ENCODE measurements at regions of chr3 and their contacts with region 1.

Region 1: GRCh38 chr3:154745960-154746359 is 316.0 kb upstream of the GPR149 start:
- DNase-seq: peak in 1 of 2 experiments; percentile 32
- H3K4me3 ChIP-seq: no peak overlapping the region
- H3K4me3 Mint-ChIP-seq: no peak overlapping the region
- H3K27ac Mint-ChIP-seq: no peak overlapping the region
- H3K4me1 ChIP-seq: no peaks in the 10 kb centered on the region
- H3K4me1 Mint-ChIP-seq: no peaks in the 10 kb centered on the region
- H3K27me3 ChIP-seq: no peaks in the 10 kb centered on the region
- H3K27me3 Mint-ChIP-seq: peaks cover 6% of the 10 kb centered on the region
- CTCF ChIP-seq: peak in 1 of 2 experiments; percentile 43

Region 2: DNA sequence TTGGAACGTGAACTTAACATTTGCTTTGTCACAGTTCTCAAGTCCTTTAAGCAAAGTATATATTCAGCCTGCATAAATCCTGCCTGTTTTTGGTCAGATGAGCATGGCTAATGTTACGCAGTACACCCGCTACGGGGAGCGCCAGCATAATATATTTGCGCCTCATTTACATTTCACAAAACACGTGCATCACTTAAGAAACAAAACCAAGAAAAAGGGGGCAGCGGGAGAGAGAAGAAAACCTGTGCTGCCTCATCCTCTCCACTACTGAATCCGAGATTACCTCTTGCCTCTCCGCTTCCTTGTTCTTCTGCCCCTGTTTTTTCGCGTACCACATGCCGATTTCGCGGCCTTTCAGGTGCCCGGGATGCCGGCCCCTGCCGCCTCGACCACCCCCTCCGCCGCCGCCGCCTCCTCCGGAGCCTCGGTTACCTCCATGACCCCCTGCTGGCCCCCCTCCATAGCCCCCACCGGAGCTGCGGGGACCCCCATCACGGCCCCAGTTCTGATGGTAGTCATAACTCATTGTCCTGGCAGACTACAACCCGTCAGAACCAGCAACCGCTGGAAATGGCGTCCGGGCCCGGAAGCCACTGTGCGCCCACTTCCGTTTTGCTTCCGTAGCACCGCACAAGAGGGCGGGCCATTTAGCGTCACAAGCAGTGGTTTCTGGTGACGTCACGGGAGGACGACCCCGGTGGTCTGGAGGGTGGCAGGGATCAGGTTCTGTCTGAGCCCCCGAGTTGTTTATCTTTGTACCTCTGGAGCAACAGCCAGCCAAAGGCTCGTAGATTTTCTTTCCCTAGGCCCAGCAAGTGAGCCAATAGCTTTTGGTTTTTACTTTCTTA is 421.8 kb before region 1 on chr3 and contains the start of gene DHX36:
- CTCF ChIA-PET with region 1: no interaction called
- POLR2A ChIA-PET with region 1: no interaction called
- intact Hi-C with region 1: loop called (anchors 5 kb)
- DNase-seq: peak; percentile 87 to 89
- H3K4me3 ChIP-seq: peak within 1 kb of the TSS; percentile 77
- H3K4me3 Mint-ChIP-seq: peak within 1 kb of the TSS; percentile 83
- H3K27ac Mint-ChIP-seq: peak within 1 kb of the TSS; percentile 91
- H3K4me1 ChIP-seq: peaks cover 20% of the 10 kb centered on the region
- H3K4me1 Mint-ChIP-seq: peaks cover 10% of the 10 kb centered on the region
- H3K27me3 ChIP-seq: no peaks in the 10 kb centered on the region
- H3K27me3 Mint-ChIP-seq: no peaks in the 10 kb centered on the region
- CTCF ChIP-seq: no peak
- total RNA-seq, gene DHX36: 76.4 and 87.3 TPM in 2 replicates

Region 3: DNA sequence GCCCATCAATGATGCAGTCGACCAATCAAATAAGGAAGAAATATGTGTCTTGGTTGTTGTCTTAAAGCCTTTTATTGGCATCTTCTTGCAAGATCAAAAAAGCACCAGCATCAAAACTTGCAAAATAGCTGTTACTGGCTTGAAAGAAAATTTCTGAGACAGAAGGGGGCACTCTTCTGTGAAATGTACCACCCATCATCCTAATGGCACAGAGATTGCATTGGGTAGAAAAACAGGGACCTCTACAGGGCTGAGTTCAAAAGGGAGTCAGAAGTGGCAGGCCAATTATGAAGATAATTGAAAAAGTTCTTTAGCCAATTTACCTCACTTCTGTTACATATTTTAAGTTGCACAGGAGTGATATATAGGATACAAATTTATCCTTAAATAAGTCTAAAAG is 193.6 kb before region 1 on chr3:
- CTCF ChIA-PET with region 1: no interaction called
- POLR2A ChIA-PET with region 1: no interaction called
- intact Hi-C with region 1: loop called (anchors 1 kb)
- DNase-seq: peak in 1 of 2 experiments; percentile 27
- H3K4me3 ChIP-seq: no peak overlapping the region
- H3K4me3 Mint-ChIP-seq: no peak overlapping the region
- H3K27ac Mint-ChIP-seq: no peak overlapping the region
- H3K4me1 ChIP-seq: no peaks in the 10 kb centered on the region
- H3K4me1 Mint-ChIP-seq: no peaks in the 10 kb centered on the region
- H3K27me3 ChIP-seq: no peaks in the 10 kb centered on the region
- H3K27me3 Mint-ChIP-seq: peaks cover 3% of the 10 kb centered on the region
- CTCF ChIP-seq: peak in 1 of 2 experiments; percentile 27

Region 4: DNA sequence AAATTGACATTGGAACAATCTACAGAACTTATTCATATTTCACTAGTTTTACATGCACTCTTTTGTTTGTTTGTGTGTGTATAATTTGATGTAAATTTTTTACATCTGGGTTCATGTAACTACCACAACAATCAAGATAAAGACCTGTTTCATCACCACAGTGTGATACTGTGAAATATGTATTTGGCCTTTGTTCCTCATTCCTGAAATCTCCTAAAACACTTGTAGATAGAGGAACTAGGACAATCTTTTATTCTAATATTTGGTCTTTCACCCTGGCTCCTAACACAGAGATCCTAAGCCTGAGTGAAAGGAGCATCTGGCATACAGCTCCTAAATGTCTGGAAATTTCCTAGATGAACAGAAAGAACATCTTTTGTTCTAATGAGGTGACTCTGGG is 161.0 kb before region 1 on chr3:
- CTCF ChIA-PET with region 1: no interaction called
- POLR2A ChIA-PET with region 1: no interaction called
- intact Hi-C with region 1: loop called (anchors 5 kb)
- DNase-seq: no peak
- H3K4me3 ChIP-seq: no peak overlapping the region
- H3K4me3 Mint-ChIP-seq: no peak overlapping the region
- H3K27ac Mint-ChIP-seq: no peak overlapping the region
- H3K4me1 ChIP-seq: no peaks in the 10 kb centered on the region
- H3K4me1 Mint-ChIP-seq: no peaks in the 10 kb centered on the region
- H3K27me3 ChIP-seq: no peaks in the 10 kb centered on the region
- H3K27me3 Mint-ChIP-seq: peaks cover 5% of the 10 kb centered on the region
- CTCF ChIP-seq: no peak

Region 5: DNA sequence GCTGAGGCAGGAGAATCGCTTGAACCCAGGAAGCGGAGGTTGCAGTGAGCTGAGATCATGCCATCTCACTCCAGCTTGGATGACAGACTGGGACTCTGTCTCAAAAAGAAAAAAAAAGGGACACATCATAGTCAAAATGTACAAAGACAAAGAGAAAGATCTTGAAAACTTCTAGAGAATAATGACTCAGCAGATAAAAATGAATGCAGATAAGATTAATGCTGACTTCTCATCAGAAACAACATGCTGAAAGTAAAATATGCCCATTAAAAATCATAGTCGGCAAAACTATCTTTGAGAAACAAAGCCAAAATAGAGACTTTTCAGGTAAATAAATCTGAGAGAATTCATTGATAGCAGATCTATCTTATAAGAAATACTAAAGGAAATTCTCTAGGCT is 44.9 kb before region 1 on chr3:
- CTCF ChIA-PET with region 1: no interaction called
- POLR2A ChIA-PET with region 1: no interaction called
- intact Hi-C with region 1: no loop called
- DNase-seq: no peak
- H3K4me3 ChIP-seq: no peak overlapping the region
- H3K4me3 Mint-ChIP-seq: no peak overlapping the region
- H3K27ac Mint-ChIP-seq: no peak overlapping the region
- H3K4me1 ChIP-seq: no peaks in the 10 kb centered on the region
- H3K4me1 Mint-ChIP-seq: no peaks in the 10 kb centered on the region
- H3K27me3 ChIP-seq: no peaks in the 10 kb centered on the region
- H3K27me3 Mint-ChIP-seq: peaks cover 7% of the 10 kb centered on the region
- CTCF ChIP-seq: no peak